GM18951 (cell line): ENCODE measurements at regions of chr12 and their contacts with region 1.

Region 1: GRCh38 chr12:39764944-39765560 is 145.4 kb upstream of the ABCD2 start:
- POLR2A ChIP-seq: no peak

Region 2: DNA sequence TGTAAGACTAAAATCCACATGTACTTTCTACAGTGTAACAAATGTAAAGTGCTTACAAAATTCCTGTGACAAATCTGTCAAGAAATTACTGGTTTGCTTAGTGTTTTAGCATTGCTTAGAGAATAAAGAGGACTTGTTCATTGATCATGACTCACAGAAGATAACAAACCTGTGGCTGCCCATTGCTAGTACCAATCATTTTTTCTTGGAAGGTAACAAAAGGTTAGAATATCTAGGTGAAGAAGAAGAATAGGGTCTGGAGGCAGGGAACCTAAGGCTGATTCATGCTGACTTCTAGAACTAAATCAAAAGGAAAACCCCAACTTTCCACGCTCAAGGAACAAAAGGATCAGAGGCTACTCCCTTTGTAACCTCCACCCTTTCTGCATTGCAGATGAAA is 87.3 kb after region 1 on chr12:
- in situ Hi-C with region 1: no loop called
- POLR2A ChIP-seq: no peak

Region 3: GRCh38 chr12:40117818-40118217 is 352.8 kb after region 1 on chr12:
- in situ Hi-C with region 1: loop called (anchors 10 kb)
- POLR2A ChIP-seq: no peak